Activated CD8-positive, alpha-beta T cell treated with anti-CD3 and anti-CD28 coated beads for 36 hours (primary cell): ENCODE measurements at regions of chr2 and their contacts with region 1.

Region 1: GRCh38 chr2:157898591-157898996 is 22.5 kb upstream of the ACVR1 start:
- DNase-seq: peak; percentile 90
- ATAC-seq: peak; percentile 70
- H3K4me3 Mint-ChIP-seq: peak overlapping the region; percentile 73
- H3K27ac Mint-ChIP-seq: peak overlapping the region; percentile 100
- H3K4me1 Mint-ChIP-seq: peaks cover 78% of the 10 kb centered on the region
- H3K27me3 Mint-ChIP-seq: no peaks in the 10 kb centered on the region
- CTCF ChIP-seq: no peak

Region 2: DNA sequence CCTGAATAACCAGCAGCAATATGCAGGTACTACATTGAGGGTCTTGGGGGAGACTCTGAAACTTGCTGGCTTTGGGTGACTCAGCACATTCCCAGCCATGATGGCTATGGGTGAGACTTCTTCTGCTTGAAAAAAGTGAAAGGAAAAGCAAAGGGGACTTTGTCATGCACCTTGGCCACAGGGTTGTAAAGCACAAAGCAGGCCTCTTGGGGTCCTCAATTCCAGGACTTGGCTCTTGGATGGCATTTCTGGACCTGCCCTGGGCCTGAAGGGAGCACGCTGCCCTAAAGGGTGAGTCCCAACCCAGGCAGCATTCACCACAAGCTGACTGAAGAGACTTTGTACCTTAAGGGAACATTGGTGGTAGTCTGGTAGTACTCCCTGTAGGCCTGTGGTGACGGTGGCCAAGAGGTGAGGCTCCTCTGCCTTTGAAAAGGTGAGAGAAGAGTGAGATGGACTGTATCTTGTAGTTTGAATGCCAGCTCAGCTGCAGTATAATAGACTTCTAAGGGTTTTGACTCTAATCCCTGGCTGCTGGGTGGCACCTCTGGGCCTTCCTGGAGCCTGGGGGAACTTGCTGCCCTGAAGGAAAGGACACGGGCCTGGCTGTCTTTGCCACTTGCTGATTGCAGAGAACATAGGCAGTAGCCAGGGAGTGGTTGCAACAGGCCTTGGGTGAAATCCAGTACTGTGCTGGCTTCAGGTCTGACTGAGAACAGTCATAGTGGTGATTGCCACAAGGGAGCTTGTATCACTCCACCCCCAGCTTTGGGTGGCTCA is 418.2 kb before region 1 on chr2:
- CTCF ChIA-PET with region 1: interaction called, 3 read pairs
- POLR2A ChIA-PET with region 1: interaction called, 6 read pairs
- intact Hi-C with region 1: loop called (anchors 5 kb)
- DNase-seq: peak; percentile 79
- ATAC-seq: peak; percentile 66
- H3K4me3 Mint-ChIP-seq: peak overlapping the region; percentile 80
- H3K27ac Mint-ChIP-seq: peak overlapping the region; percentile 98
- H3K4me1 Mint-ChIP-seq: peaks cover 82% of the 10 kb centered on the region
- H3K27me3 Mint-ChIP-seq: no peaks in the 10 kb centered on the region
- CTCF ChIP-seq: no peak

Region 3: GRCh38 chr2:157628477-157629415 is 269.8 kb before region 1 on chr2 and contains the start of gene ACVR1C:
- CTCF ChIA-PET with region 1: no interaction called
- POLR2A ChIA-PET with region 1: interaction called, 3 read pairs
- intact Hi-C with region 1: loop called (anchors 10 kb)
- DNase-seq: peak; percentile 72
- ATAC-seq: peak; percentile 87
- H3K4me3 Mint-ChIP-seq: peak within 1 kb of the TSS; percentile 79
- H3K27ac Mint-ChIP-seq: peak within 1 kb of the TSS; percentile 45
- H3K4me1 Mint-ChIP-seq: peaks cover 31% of the 10 kb centered on the region
- H3K27me3 Mint-ChIP-seq: peaks cover 6% of the 10 kb centered on the region
- CTCF ChIP-seq: peak; percentile 53
- total RNA-seq, gene ACVR1C: 1.7 to 2.2 TPM

Region 4: DNA sequence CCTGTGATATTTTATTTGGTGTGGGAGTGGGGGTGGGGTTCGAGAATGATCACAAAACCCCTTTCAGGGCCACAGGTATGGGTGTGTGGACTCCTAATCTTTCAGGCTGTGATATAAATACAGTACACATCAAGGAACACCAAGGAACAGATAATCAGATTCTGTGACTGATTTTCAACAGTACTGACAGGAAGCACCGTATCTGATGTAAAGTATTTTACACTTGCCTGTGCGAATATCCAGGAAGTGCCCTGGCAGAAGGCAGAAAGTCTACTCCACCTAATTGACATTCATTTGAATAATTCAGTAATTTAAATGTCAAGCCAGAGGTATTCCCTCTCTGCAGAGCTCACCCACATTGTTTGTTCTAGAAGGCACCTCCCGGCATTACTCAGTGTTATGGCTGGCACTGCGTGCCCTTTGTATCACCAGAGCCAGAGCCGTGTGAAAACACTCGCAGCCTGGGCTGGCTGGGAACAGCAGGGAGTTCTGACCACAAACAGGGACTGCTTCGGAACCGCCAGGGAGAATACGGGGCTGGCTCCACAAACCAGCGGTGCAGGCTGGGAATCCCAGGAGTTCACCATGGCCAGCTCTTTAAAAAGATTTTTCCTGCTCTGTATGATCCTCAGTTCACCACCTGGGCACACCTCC is 114.3 kb before region 1 on chr2:
- CTCF ChIA-PET with region 1: no interaction called
- POLR2A ChIA-PET with region 1: no interaction called
- intact Hi-C with region 1: loop called (anchors 5 kb)
- DNase-seq: peak; percentile 16
- ATAC-seq: peak; percentile 45
- H3K4me3 Mint-ChIP-seq: no peak overlapping the region
- H3K27ac Mint-ChIP-seq: peak overlapping the region; percentile 67
- H3K4me1 Mint-ChIP-seq: peaks cover 40% of the 10 kb centered on the region
- H3K27me3 Mint-ChIP-seq: no peaks in the 10 kb centered on the region
- CTCF ChIP-seq: no peak

Region 5: GRCh38 chr2:157876066-157876787 is 22.4 kb before region 1 on chr2 and contains the start of gene ACVR1:
- CTCF ChIA-PET with region 1: interaction called, 14 read pairs
- POLR2A ChIA-PET with region 1: interaction called, 36 read pairs
- intact Hi-C with region 1: loop called (anchors 1 kb)
- DNase-seq: peak; percentile 89
- ATAC-seq: peak; percentile 88
- H3K4me3 Mint-ChIP-seq: peak within 1 kb of the TSS; percentile 79
- H3K27ac Mint-ChIP-seq: peak within 1 kb of the TSS; percentile 86
- H3K4me1 Mint-ChIP-seq: peaks cover 49% of the 10 kb centered on the region
- H3K27me3 Mint-ChIP-seq: no peaks in the 10 kb centered on the region
- CTCF ChIP-seq: no peak
- total RNA-seq, gene ACVR1: 8.3 to 10.1 TPM

Region 6: GRCh38 chr2:158006961-158007719 is 108.5 kb after region 1 on chr2:
- CTCF ChIA-PET with region 1: interaction called, 6 read pairs
- POLR2A ChIA-PET with region 1: no interaction called
- intact Hi-C with region 1: loop called (anchors 5 kb)
- DNase-seq: peak; percentile 31
- ATAC-seq: peak; percentile 65
- H3K4me3 Mint-ChIP-seq: no peak overlapping the region
- H3K27ac Mint-ChIP-seq: no peak overlapping the region
- H3K4me1 Mint-ChIP-seq: peaks cover 4% of the 10 kb centered on the region
- H3K27me3 Mint-ChIP-seq: peaks cover 2% of the 10 kb centered on the region
- CTCF ChIP-seq: no peak

Region 7: DNA sequence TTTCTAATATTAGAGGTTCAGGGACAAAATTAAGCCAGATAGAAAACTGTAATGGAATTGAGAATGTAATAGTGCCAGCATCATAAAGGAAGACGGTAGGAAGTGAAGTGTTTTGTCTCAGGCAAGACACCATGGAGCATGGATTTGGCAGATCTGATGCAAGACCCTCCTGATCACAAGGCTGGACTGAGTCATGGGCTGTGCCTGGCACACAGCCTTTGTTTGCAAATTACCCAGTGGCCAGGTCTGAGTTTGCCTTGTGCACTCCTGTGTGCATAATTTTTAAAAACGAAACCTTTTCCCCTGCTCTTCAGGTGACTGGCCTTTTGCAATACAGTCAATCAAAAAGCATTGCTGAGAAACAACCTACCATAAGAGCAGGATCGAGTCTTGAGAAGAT is 201.1 kb after region 1 on chr2:
- CTCF ChIA-PET with region 1: no interaction called
- POLR2A ChIA-PET with region 1: no interaction called
- intact Hi-C with region 1: no loop called
- DNase-seq: no peak
- ATAC-seq: no peak
- H3K4me3 Mint-ChIP-seq: no peak overlapping the region
- H3K27ac Mint-ChIP-seq: no peak overlapping the region
- H3K4me1 Mint-ChIP-seq: no peaks in the 10 kb centered on the region
- H3K27me3 Mint-ChIP-seq: no peaks in the 10 kb centered on the region
- CTCF ChIP-seq: no peak